CD8-positive, alpha-beta memory T cell (primary cell): ENCODE measurements at regions of chr6 and their contacts with region 1.

Region 1: GRCh38 chr6:159104163-159104925 is 59.6 kb upstream of the TAGAP start:
- DNase-seq: peak; percentile 64 to 86 (median 71)
- H3K4me3 ChIP-seq: peak overlapping the region; percentile 28
- H3K4me3 Mint-ChIP-seq: peak overlapping the region; percentile 33 to 82 (median 71)
- H3K27ac ChIP-seq: no peak overlapping the region
- H3K27ac Mint-ChIP-seq: peak overlapping the region; percentile 53 to 95 (median 90)
- H3K4me1 ChIP-seq: peaks cover 75% of the 10 kb centered on the region
- H3K4me1 Mint-ChIP-seq: peaks cover 67 to 92% (median 88%) of the 10 kb centered on the region in 3 donors
- H3K27me3 ChIP-seq: no peaks in the 10 kb centered on the region
- H3K27me3 Mint-ChIP-seq: no peaks in the 10 kb centered on the region

Region 2: GRCh38 chr6:158744986-158745430 is 359.3 kb before region 1 on chr6:
- CTCF ChIA-PET with region 1: no interaction called
- POLR2A ChIA-PET with region 1: no interaction called
- DNase-seq: no peak
- H3K4me3 ChIP-seq: no peak overlapping the region
- H3K4me3 Mint-ChIP-seq: no peak overlapping the region
- H3K27ac ChIP-seq: no peak overlapping the region
- H3K27ac Mint-ChIP-seq: peak overlapping the region in 1 of 8 donors; percentile 5
- H3K4me1 ChIP-seq: no peaks in the 10 kb centered on the region
- H3K4me1 Mint-ChIP-seq: peaks cover 0 to 6% (median 0%) of the 10 kb centered on the region in 3 donors
- H3K27me3 ChIP-seq: no peaks in the 10 kb centered on the region
- H3K27me3 Mint-ChIP-seq: no peaks in the 10 kb centered on the region

Region 3: GRCh38 chr6:158910484-158911348 is 193.6 kb before region 1 on chr6:
- CTCF ChIA-PET with region 1: no interaction called
- POLR2A ChIA-PET with region 1: no interaction called
- DNase-seq: peak in 1 of 5 donors; percentile 21
- H3K4me3 ChIP-seq: peak overlapping the region; percentile 67
- H3K4me3 Mint-ChIP-seq: peak overlapping the region; percentile 37 to 90 (median 82)
- H3K27ac ChIP-seq: no peak overlapping the region
- H3K27ac Mint-ChIP-seq: peak overlapping the region in 7 of 8 donors; percentile 66 to 95 (median 85)
- H3K4me1 ChIP-seq: peaks cover 33% of the 10 kb centered on the region
- H3K4me1 Mint-ChIP-seq: peaks cover 43 to 50% (median 46%) of the 10 kb centered on the region in 3 donors
- H3K27me3 ChIP-seq: no peaks in the 10 kb centered on the region
- H3K27me3 Mint-ChIP-seq: peaks cover 0 to 2% of the 10 kb centered on the region in 2 donors

Region 4: GRCh38 chr6:158962371-158962770 is 142.0 kb before region 1 on chr6:
- CTCF ChIA-PET with region 1: no interaction called
- POLR2A ChIA-PET with region 1: no interaction called
- DNase-seq: no peak
- H3K4me3 ChIP-seq: no peak overlapping the region
- H3K4me3 Mint-ChIP-seq: no peak overlapping the region
- H3K27ac ChIP-seq: no peak overlapping the region
- H3K27ac Mint-ChIP-seq: no peak overlapping the region
- H3K4me1 ChIP-seq: no peaks in the 10 kb centered on the region
- H3K4me1 Mint-ChIP-seq: peaks cover 0 to 9% (median 4%) of the 10 kb centered on the region in 3 donors
- H3K27me3 ChIP-seq: no peaks in the 10 kb centered on the region
- H3K27me3 Mint-ChIP-seq: no peaks in the 10 kb centered on the region

Region 5: DNA sequence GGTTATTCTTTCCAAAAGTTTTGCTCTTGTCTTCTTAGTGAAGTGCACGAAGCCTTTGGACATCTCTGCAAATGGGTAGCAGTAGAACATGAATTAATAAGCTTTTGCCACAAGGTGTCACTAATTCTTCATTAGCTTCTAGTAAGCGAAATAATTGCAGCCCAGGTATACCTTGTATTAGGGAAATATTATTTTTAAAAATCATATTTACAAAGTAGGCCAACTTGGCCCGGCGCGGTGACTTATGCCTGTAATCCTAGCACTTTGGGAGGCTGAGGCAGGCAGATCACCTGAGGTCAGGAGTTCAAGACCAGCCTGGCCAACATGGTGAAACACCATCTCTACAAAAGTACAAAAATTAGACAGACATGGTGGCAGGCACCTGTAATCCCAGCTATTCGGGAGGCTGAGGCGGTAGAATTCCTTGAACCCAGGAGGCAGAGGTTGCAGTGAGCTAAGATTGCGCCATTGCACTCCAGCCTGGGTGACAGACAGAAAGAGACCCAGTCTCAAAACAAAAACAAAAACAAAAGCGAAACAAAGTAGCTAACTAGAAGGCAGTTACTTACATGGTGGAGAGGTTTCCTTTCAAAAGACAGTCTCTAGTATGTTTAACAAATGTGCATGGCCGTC is 95.6 kb before region 1 on chr6:
- CTCF ChIA-PET with region 1: interaction called, 248 read pairs
- POLR2A ChIA-PET with region 1: interaction called, 19 read pairs
- DNase-seq: peak in 3 of 5 donors; percentile 48 to 53 (median 48)
- H3K4me3 ChIP-seq: peak overlapping the region; percentile 44
- H3K4me3 Mint-ChIP-seq: peak overlapping the region; percentile 47 to 92 (median 81)
- H3K27ac ChIP-seq: no peak overlapping the region
- H3K27ac Mint-ChIP-seq: peak overlapping the region; percentile 49 to 92 (median 84)
- H3K4me1 ChIP-seq: peaks cover 20% of the 10 kb centered on the region
- H3K4me1 Mint-ChIP-seq: peaks cover 35 to 50% (median 50%) of the 10 kb centered on the region in 3 donors
- H3K27me3 ChIP-seq: no peaks in the 10 kb centered on the region
- H3K27me3 Mint-ChIP-seq: no peaks in the 10 kb centered on the region

Region 6: DNA sequence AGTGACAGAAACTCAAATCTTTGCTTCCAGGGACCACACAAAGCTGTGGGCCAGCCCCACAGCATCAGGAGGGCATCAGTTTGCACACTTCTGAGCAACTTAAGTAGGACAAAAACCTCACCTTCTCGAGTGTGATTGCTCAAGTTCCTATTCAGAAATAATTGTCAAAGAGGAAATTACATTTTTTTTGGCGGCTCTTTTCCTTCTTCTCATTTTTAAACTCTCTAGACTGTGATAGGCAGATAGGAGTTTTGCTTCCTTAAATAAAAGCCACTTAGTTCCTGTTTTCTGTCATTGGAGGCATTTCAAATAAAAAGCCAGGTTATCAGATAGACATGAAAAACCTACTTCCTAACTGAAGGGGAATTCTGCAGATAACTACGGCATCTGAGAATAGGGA is 48.3 kb before region 1 on chr6:
- CTCF ChIA-PET with region 1: interaction called, 54 read pairs
- POLR2A ChIA-PET with region 1: interaction called, 5 read pairs
- DNase-seq: no peak
- H3K4me3 ChIP-seq: peak overlapping the region; percentile 24
- H3K4me3 Mint-ChIP-seq: peak overlapping the region; percentile 12 to 73 (median 61)
- H3K27ac ChIP-seq: no peak overlapping the region
- H3K27ac Mint-ChIP-seq: peak overlapping the region; percentile 74 to 93 (median 82)
- H3K4me1 ChIP-seq: peaks cover 68% of the 10 kb centered on the region
- H3K4me1 Mint-ChIP-seq: peaks cover 68 to 86% (median 84%) of the 10 kb centered on the region in 3 donors
- H3K27me3 ChIP-seq: no peaks in the 10 kb centered on the region
- H3K27me3 Mint-ChIP-seq: no peaks in the 10 kb centered on the region

Region 7: DNA sequence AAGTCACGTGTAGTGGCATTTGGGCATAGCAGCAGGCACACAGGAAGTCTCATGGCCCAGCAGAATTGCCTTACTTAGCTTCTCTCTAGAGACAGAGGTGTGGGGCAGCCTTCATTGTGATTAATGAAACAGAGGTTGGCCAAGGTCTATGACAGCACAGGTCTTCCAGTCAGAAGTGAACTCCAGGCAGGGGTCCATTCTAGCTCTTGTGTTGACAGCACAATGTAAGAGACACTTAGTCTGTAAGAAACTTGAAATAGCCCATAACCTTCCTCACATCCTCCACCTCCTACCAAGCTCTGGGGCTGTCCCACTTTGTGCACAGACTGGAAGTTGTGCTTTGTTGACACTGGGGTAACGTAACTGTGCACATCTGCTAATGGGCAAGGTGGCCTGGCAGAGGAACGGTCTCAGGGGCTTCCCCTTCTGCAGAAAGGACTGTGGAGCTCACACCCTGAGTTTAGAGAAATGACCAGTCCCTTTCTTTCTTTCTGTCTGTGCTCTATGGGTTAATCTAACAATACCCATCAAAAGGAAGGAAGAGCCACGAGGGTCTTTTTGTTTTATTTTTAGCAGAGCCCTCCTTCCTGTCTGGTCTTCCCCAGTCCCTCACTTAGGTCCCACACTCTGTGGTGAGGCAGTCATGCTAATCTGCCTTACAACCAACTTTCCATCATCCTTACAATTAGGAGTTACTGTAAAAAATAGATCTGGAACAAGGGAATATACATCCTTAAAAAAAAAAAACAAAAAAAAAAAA is 23.9 kb before region 1 on chr6:
- CTCF ChIA-PET with region 1: interaction called, 15 read pairs
- POLR2A ChIA-PET with region 1: interaction called, 6 read pairs
- DNase-seq: no peak
- H3K4me3 ChIP-seq: peak overlapping the region; percentile 2
- H3K4me3 Mint-ChIP-seq: peak overlapping the region in 4 of 7 donors; percentile 4 to 41 (median 26)
- H3K27ac ChIP-seq: no peak overlapping the region
- H3K27ac Mint-ChIP-seq: peak overlapping the region in 4 of 8 donors; percentile 51 to 82 (median 60)
- H3K4me1 ChIP-seq: peaks cover 20% of the 10 kb centered on the region
- H3K4me1 Mint-ChIP-seq: peaks cover 44 to 51% (median 49%) of the 10 kb centered on the region in 3 donors
- H3K27me3 ChIP-seq: no peaks in the 10 kb centered on the region
- H3K27me3 Mint-ChIP-seq: peaks cover 0 to 1% of the 10 kb centered on the region in 2 donors

Region 8: GRCh38 chr6:159125014-159125609 is 20.8 kb after region 1 on chr6:
- CTCF ChIA-PET with region 1: interaction called, 15 read pairs
- POLR2A ChIA-PET with region 1: no interaction called
- DNase-seq: no peak
- H3K4me3 ChIP-seq: no peak overlapping the region
- H3K4me3 Mint-ChIP-seq: no peak overlapping the region
- H3K27ac ChIP-seq: no peak overlapping the region
- H3K27ac Mint-ChIP-seq: no peak overlapping the region
- H3K4me1 ChIP-seq: no peaks in the 10 kb centered on the region
- H3K4me1 Mint-ChIP-seq: no peaks in the 10 kb centered on the region
- H3K27me3 ChIP-seq: no peaks in the 10 kb centered on the region
- H3K27me3 Mint-ChIP-seq: peaks cover 3 to 4% of the 10 kb centered on the region in 2 donors

Region 9: GRCh38 chr6:159312206-159312605 is 207.9 kb after region 1 on chr6:
- CTCF ChIA-PET with region 1: no interaction called
- POLR2A ChIA-PET with region 1: no interaction called
- DNase-seq: no peak
- H3K4me3 ChIP-seq: no peak overlapping the region
- H3K4me3 Mint-ChIP-seq: no peak overlapping the region
- H3K27ac ChIP-seq: no peak overlapping the region
- H3K27ac Mint-ChIP-seq: no peak overlapping the region
- H3K4me1 ChIP-seq: no peaks in the 10 kb centered on the region
- H3K4me1 Mint-ChIP-seq: no peaks in the 10 kb centered on the region
- H3K27me3 ChIP-seq: no peaks in the 10 kb centered on the region
- H3K27me3 Mint-ChIP-seq: peaks cover 5 to 6% of the 10 kb centered on the region in 2 donors